Right ventricle myocardium inferior (tissue), 1 donor: ENCODE measurements at regions of chr3 and their contacts with region 1.

Region 1: GRCh38 chr3:148379763-148380382 is 317.8 kb upstream of the AGTR1 start:
- DNase-seq: no peak
- ATAC-seq: peak; percentile 64

Region 2: GRCh38 chr3:148360051-148360450 is 19.8 kb before region 1 on chr3:
- intact Hi-C with region 1: no loop called
- DNase-seq: no peak
- ATAC-seq: no peak

Region 3: GRCh38 chr3:148459931-148460513 is 80.1 kb after region 1 on chr3:
- intact Hi-C with region 1: no loop called
- DNase-seq: no peak
- ATAC-seq: no peak

Region 4: GRCh38 chr3:148727247-148727646 is 347.4 kb after region 1 on chr3:
- intact Hi-C with region 1: loop called (anchors 10 kb)
- DNase-seq: no peak
- ATAC-seq: no peak